Naive thymus-derived CD4-positive, alpha-beta T cell (primary cell): ENCODE measurements at regions of chr6 and their contacts with region 1.

Region 1: DNA sequence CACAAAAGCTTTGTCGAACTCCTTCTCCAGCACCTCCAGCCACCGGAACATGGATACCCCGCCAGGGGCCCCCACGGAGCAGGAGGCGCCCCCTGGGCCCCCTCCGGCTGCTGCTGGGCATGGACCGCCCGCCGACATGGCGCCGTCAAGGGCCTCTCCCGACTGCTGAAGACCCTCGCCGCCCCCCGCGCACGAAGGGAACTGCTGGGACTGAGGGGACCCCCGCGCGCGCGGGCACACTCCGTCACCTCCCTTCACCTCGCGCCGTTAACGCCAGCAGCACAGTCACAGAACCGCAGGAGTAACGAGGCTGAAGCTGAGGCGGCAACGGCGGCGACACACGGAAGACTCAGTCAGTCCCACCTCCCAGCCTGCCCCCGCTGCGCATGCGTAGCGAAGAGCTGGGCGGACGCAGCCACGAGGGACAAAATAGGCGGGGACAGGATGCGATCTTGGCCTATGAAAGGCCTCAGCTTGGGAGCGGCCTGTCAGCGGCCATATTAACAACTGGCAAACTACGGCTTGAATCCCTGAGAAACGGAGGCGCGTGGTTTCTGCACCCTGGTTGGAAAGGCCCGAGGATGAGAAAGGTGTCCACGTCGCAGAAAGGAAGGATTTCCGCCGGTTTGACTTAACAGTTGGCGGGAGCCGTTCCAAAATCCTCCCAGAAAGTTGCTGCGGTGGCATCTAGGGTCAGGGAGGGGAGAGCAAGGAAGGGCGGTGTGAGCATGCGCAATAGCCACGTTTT is at the start of gene GOPC:
- DNase-seq: peak; percentile 87 to 97 (median 96)
- ATAC-seq: peak; percentile 97
- H3K4me3 ChIP-seq: peak within 1 kb of the TSS; percentile 93
- H3K4me3 Mint-ChIP-seq: peak within 1 kb of the TSS; percentile 96 to 100 (median 99)
- H3K27ac ChIP-seq: peak within 1 kb of the TSS; percentile 92
- H3K27ac Mint-ChIP-seq: peak within 1 kb of the TSS; percentile 94 to 99 (median 99)
- H3K4me1 ChIP-seq: peaks cover 0 to 9% of the 10 kb centered on the region in 2 donors
- H3K4me1 Mint-ChIP-seq: peaks cover 24 to 58% (median 49%) of the 10 kb centered on the region in 7 donors
- H3K27me3 ChIP-seq: no peaks in the 10 kb centered on the region
- H3K27me3 Mint-ChIP-seq: peaks cover 0 to 5% (median 4%) of the 10 kb centered on the region in 5 donors
- total RNA-seq, gene GOPC: 16.2 to 39.4 (median 26.5) TPM

Region 2: GRCh38 chr6:116570856-116571682 is 1031.3 kb before region 1 on chr6 and contains the start of gene RWDD1:
- CTCF ChIA-PET with region 1: no interaction called
- POLR2A ChIA-PET with region 1: no interaction called
- intact Hi-C with region 1: loop called (anchors 1 kb)
- DNase-seq: peak; percentile 91 to 99 (median 98)
- ATAC-seq: peak; percentile 98
- H3K4me3 ChIP-seq: peak within 1 kb of the TSS; percentile 86
- H3K4me3 Mint-ChIP-seq: peak within 1 kb of the TSS; percentile 94 to 99 (median 98)
- H3K27ac ChIP-seq: peak within 1 kb of the TSS; percentile 95
- H3K27ac Mint-ChIP-seq: peak within 1 kb of the TSS; percentile 96 to 100 (median 99)
- H3K4me1 ChIP-seq: peaks cover 16 to 21% of the 10 kb centered on the region in 2 donors
- H3K4me1 Mint-ChIP-seq: peaks cover 33 to 62% (median 55%) of the 10 kb centered on the region in 7 donors
- H3K27me3 ChIP-seq: no peaks in the 10 kb centered on the region
- H3K27me3 Mint-ChIP-seq: peaks cover 0 to 11% (median 0%) of the 10 kb centered on the region in 5 donors
- total RNA-seq, gene RWDD1: 33.2 to 39.9 (median 36.7) TPM

Region 3: DNA sequence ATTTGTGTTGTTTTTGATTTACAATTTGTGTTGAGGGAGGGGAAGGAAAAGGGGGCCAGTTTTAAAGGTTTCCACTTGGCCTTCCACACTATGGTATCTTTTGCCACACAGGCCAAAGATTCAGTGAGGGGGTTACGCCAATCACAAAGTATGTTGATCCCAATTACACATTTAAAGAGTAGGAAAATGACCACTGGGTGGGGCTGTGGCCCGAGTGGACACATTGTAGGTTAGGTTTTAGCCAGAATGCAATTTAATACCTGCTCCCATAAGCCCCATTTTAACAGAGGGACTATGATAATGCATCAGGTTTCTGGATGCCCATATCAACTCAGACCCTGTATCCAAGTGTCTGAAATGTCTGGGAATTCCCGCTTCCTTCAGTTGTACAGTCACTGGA is 321.4 kb before region 1 on chr6:
- CTCF ChIA-PET with region 1: no interaction called
- POLR2A ChIA-PET with region 1: no interaction called
- intact Hi-C with region 1: no loop called
- DNase-seq: no peak
- ATAC-seq: no peak
- H3K4me3 ChIP-seq: no peak overlapping the region
- H3K4me3 Mint-ChIP-seq: no peak overlapping the region
- H3K27ac ChIP-seq: no peak overlapping the region
- H3K27ac Mint-ChIP-seq: no peak overlapping the region
- H3K4me1 ChIP-seq: no peaks in the 10 kb centered on the region
- H3K4me1 Mint-ChIP-seq: no peaks in the 10 kb centered on the region
- H3K27me3 ChIP-seq: peaks cover 0 to 7% of the 10 kb centered on the region in 2 donors
- H3K27me3 Mint-ChIP-seq: peaks cover 11 to 38% (median 28%) of the 10 kb centered on the region in 5 donors

Region 4: GRCh38 chr6:117346142-117346930 is 256.0 kb before region 1 on chr6:
- CTCF ChIA-PET with region 1: interaction called, 9 read pairs
- POLR2A ChIA-PET with region 1: no interaction called
- intact Hi-C with region 1: loop called (anchors 1 kb)
- DNase-seq: peak in 5 of 9 donors; percentile 3 to 35 (median 14)
- ATAC-seq: peak; percentile 44
- H3K4me3 ChIP-seq: no peak overlapping the region
- H3K4me3 Mint-ChIP-seq: no peak overlapping the region
- H3K27ac ChIP-seq: no peak overlapping the region
- H3K27ac Mint-ChIP-seq: no peak overlapping the region
- H3K4me1 ChIP-seq: no peaks in the 10 kb centered on the region
- H3K4me1 Mint-ChIP-seq: no peaks in the 10 kb centered on the region
- H3K27me3 ChIP-seq: no peaks in the 10 kb centered on the region
- H3K27me3 Mint-ChIP-seq: peaks cover 0 to 21% (median 7%) of the 10 kb centered on the region in 5 donors

Region 5: GRCh38 chr6:117547688-117548621 is 54.4 kb before region 1 on chr6:
- CTCF ChIA-PET with region 1: interaction called, 4 read pairs
- POLR2A ChIA-PET with region 1: interaction called, 27 read pairs
- intact Hi-C with region 1: loop called (anchors 1 kb)
- DNase-seq: peak; percentile 20 to 57 (median 37)
- ATAC-seq: peak; percentile 60
- H3K4me3 ChIP-seq: peak overlapping the region; percentile 75
- H3K4me3 Mint-ChIP-seq: peak overlapping the region; percentile 81 to 90 (median 86)
- H3K27ac ChIP-seq: peak overlapping the region; percentile 45
- H3K27ac Mint-ChIP-seq: peak overlapping the region; percentile 79 to 95 (median 87)
- H3K4me1 ChIP-seq: peaks cover 18 to 37% of the 10 kb centered on the region in 2 donors
- H3K4me1 Mint-ChIP-seq: peaks cover 28 to 44% (median 41%) of the 10 kb centered on the region in 7 donors
- H3K27me3 ChIP-seq: no peaks in the 10 kb centered on the region
- H3K27me3 Mint-ChIP-seq: peaks cover 0 to 9% (median 0%) of the 10 kb centered on the region in 5 donors

Region 6: GRCh38 chr6:118651282-118652050 is 1049.1 kb after region 1 on chr6 and contains the start of gene CEP85L:
- CTCF ChIA-PET with region 1: no interaction called
- POLR2A ChIA-PET with region 1: no interaction called
- intact Hi-C with region 1: loop called (anchors 1 to 5 kb)
- DNase-seq: peak; percentile 84 to 91 (median 89)
- ATAC-seq: peak; percentile 96
- H3K4me3 ChIP-seq: peak within 1 kb of the TSS; percentile 66
- H3K4me3 Mint-ChIP-seq: peak within 1 kb of the TSS; percentile 91 to 97 (median 94)
- H3K27ac ChIP-seq: peak within 1 kb of the TSS; percentile 87
- H3K27ac Mint-ChIP-seq: peak within 1 kb of the TSS; percentile 88 to 99 (median 94)
- H3K4me1 ChIP-seq: peaks cover 32 to 40% of the 10 kb centered on the region in 2 donors
- H3K4me1 Mint-ChIP-seq: peaks cover 33 to 73% (median 59%) of the 10 kb centered on the region in 7 donors
- H3K27me3 ChIP-seq: no peaks in the 10 kb centered on the region
- H3K27me3 Mint-ChIP-seq: no peaks in the 10 kb centered on the region
- total RNA-seq, gene CEP85L: 51.1 to 89.1 (median 78.6) TPM

Region 7: GRCh38 chr6:119078376-119079282 is 1476.3 kb after region 1 on chr6 and contains the start of gene FAM184A:
- CTCF ChIA-PET with region 1: no interaction called
- POLR2A ChIA-PET with region 1: no interaction called
- intact Hi-C with region 1: loop called (anchors 2 to 5 kb)
- DNase-seq: peak; percentile 74 to 86 (median 82)
- ATAC-seq: peak; percentile 79
- H3K4me3 ChIP-seq: peak within 1 kb of the TSS; percentile 77
- H3K4me3 Mint-ChIP-seq: peak within 1 kb of the TSS; percentile 75 to 97 (median 94)
- H3K27ac ChIP-seq: peak within 1 kb of the TSS; percentile 74
- H3K27ac Mint-ChIP-seq: peak within 1 kb of the TSS; percentile 66 to 97 (median 95)
- H3K4me1 ChIP-seq: peaks cover 5 to 25% of the 10 kb centered on the region in 2 donors
- H3K4me1 Mint-ChIP-seq: peaks cover 14 to 50% (median 39%) of the 10 kb centered on the region in 7 donors
- H3K27me3 ChIP-seq: no peaks in the 10 kb centered on the region
- H3K27me3 Mint-ChIP-seq: peaks cover 0 to 9% (median 0%) of the 10 kb centered on the region in 5 donors
- total RNA-seq, gene FAM184A: 5.3 to 9.8 (median 7.9) TPM